B cell (primary cell): ENCODE measurements at regions of chr6 and their contacts with region 1.

Region 1: GRCh38 chr6:31619805-31620585 is 520 bp upstream of the PRRC2A start:
- DNase-seq: peak; percentile 99
- ATAC-seq: peak; percentile 84
- H3K4me3 ChIP-seq: peak overlapping the region; percentile 8 to 90 (median 84)
- H3K4me3 Mint-ChIP-seq: peak overlapping the region; percentile 86
- H3K27ac ChIP-seq: peak overlapping the region; percentile 97 to 99
- H3K27ac Mint-ChIP-seq: peak overlapping the region; percentile 95
- H3K4me1 ChIP-seq: peaks cover 26 to 35% of the 10 kb centered on the region in 2 donors
- H3K4me1 Mint-ChIP-seq: peaks cover 45% of the 10 kb centered on the region
- H3K27me3 ChIP-seq: no peaks in the 10 kb centered on the region
- H3K27me3 Mint-ChIP-seq: no peaks in the 10 kb centered on the region
- CTCF ChIP-seq: no peak

Region 2: GRCh38 chr6:30530014-30530413 is 1090.0 kb before region 1 on chr6:
- CTCF ChIA-PET with region 1: no interaction called
- POLR2A ChIA-PET with region 1: no interaction called
- intact Hi-C with region 1: no loop called
- DNase-seq: peak; percentile 53
- ATAC-seq: peak; percentile 18
- H3K4me3 ChIP-seq: peak overlapping the region in 1 of 5 experiments; percentile 30
- H3K4me3 Mint-ChIP-seq: peak overlapping the region; percentile 49
- H3K27ac ChIP-seq: peak overlapping the region; percentile 58
- H3K27ac Mint-ChIP-seq: peak overlapping the region; percentile 92
- H3K4me1 ChIP-seq: peaks cover 36 to 54% of the 10 kb centered on the region in 2 donors
- H3K4me1 Mint-ChIP-seq: peaks cover 53% of the 10 kb centered on the region
- H3K27me3 ChIP-seq: no peaks in the 10 kb centered on the region
- H3K27me3 Mint-ChIP-seq: no peaks in the 10 kb centered on the region
- CTCF ChIP-seq: no peak

Region 3: GRCh38 chr6:31559958-31560696 is 59.9 kb before region 1 on chr6:
- CTCF ChIA-PET with region 1: interaction called, 3 read pairs
- POLR2A ChIA-PET with region 1: interaction called, 11 read pairs
- intact Hi-C with region 1: no loop called
- DNase-seq: peak; percentile 83
- ATAC-seq: peak; percentile 64
- H3K4me3 ChIP-seq: peak overlapping the region; percentile 4 to 61 (median 45)
- H3K4me3 Mint-ChIP-seq: peak overlapping the region; percentile 92
- H3K27ac ChIP-seq: peak overlapping the region; percentile 80 to 87
- H3K27ac Mint-ChIP-seq: peak overlapping the region; percentile 94
- H3K4me1 ChIP-seq: peaks cover 80 to 81% of the 10 kb centered on the region in 2 donors
- H3K4me1 Mint-ChIP-seq: peaks cover 82% of the 10 kb centered on the region
- H3K27me3 ChIP-seq: no peaks in the 10 kb centered on the region
- H3K27me3 Mint-ChIP-seq: no peaks in the 10 kb centered on the region
- CTCF ChIP-seq: no peak

Region 4: DNA sequence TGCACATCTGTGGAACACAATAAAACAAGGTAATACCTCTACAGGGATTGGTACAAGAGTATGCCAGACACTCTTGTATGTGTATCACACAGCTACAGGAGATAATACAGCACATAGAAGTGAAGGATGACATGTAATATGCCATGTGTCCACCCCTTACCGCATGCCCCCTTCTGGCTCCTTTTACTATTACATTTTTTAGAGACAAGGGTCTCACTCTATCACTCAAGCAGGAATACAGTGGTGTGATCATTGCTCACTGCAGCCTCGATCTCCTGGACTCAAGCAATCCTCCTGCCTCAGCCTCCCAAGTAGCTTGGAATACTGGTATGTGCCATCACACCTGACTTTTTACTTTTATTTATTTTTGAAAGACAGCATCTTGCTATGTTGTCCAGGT is 23.0 kb before region 1 on chr6:
- CTCF ChIA-PET with region 1: interaction called, 44 read pairs
- POLR2A ChIA-PET with region 1: interaction called, 6 read pairs
- intact Hi-C with region 1: loop called (anchors 1 kb)
- DNase-seq: peak; percentile 86
- ATAC-seq: peak; percentile 68
- H3K4me3 ChIP-seq: no peak overlapping the region
- H3K4me3 Mint-ChIP-seq: peak overlapping the region; percentile 35
- H3K27ac ChIP-seq: peak overlapping the region in 1 of 2 donors; percentile 27
- H3K27ac Mint-ChIP-seq: peak overlapping the region; percentile 75
- H3K4me1 ChIP-seq: peaks cover 49 to 61% of the 10 kb centered on the region in 2 donors
- H3K4me1 Mint-ChIP-seq: peaks cover 52% of the 10 kb centered on the region
- H3K27me3 ChIP-seq: no peaks in the 10 kb centered on the region
- H3K27me3 Mint-ChIP-seq: no peaks in the 10 kb centered on the region
- CTCF ChIP-seq: peak; percentile 80

Region 5: DNA sequence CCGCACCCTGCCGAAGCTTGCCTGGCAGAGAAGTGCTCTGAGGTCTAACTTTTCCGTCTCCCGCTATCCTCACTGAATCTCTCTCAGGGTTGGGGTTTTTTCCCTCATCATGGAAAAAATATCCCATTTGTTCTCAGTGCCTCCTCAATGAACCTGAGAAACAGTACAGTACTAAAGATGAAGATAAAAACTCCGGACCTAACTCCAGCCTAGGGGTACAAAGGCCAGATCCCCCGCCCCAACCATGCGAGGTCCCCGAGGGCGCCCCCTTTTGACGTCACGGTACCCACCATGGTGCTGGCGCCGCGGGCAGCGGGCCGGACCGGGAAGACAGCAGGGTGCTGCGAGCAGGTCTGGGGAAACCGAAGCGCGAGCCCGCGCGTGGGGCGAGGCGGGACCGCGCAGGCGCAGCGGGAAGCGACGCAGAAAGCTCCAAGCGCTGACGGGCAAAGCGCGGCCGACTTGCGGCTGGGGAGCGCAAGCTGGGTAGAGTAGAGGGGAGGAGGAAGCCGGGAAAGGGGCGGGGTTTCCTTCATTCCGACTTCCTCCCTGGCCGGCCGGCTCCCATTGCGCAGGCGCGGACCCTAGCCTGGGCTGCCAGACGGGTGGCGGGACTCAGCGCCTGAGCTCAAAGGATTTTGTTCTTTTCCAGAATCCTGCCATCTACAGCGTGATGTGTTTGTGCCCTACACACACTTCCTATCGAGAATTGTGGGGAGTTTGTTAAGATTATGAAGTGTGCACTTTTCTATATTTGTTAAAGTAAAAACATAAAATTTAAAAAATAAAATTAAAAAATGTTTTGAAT is 186.7 kb after region 1 on chr6 and contains the start of gene LSM2:
- CTCF ChIA-PET with region 1: no interaction called
- POLR2A ChIA-PET with region 1: no interaction called
- intact Hi-C with region 1: loop called (anchors 5 kb)
- DNase-seq: peak; percentile 97
- ATAC-seq: peak; percentile 98
- H3K4me3 ChIP-seq: peak within 1 kb of the TSS; percentile 68 to 84 (median 84)
- H3K4me3 Mint-ChIP-seq: peak within 1 kb of the TSS; percentile 87
- H3K27ac ChIP-seq: peak within 1 kb of the TSS; percentile 77 to 93
- H3K27ac Mint-ChIP-seq: peak within 1 kb of the TSS; percentile 88
- H3K4me1 ChIP-seq: peaks cover 8 to 11% of the 10 kb centered on the region in 2 donors
- H3K4me1 Mint-ChIP-seq: peaks cover 16% of the 10 kb centered on the region
- H3K27me3 ChIP-seq: no peaks in the 10 kb centered on the region
- H3K27me3 Mint-ChIP-seq: no peaks in the 10 kb centered on the region
- CTCF ChIP-seq: peak; percentile 34
- total RNA-seq, gene LSM2: 45.3 and 52.4 TPM in 2 replicates

Region 6: GRCh38 chr6:31958741-31959739 is 339.0 kb after region 1 on chr6 and contains the starts of genes NELFE and SKIC2:
- CTCF ChIA-PET with region 1: no interaction called
- POLR2A ChIA-PET with region 1: no interaction called
- intact Hi-C with region 1: loop called (anchors 5 kb)
- DNase-seq: peak; percentile 99
- ATAC-seq: peak; percentile 98
- H3K4me3 ChIP-seq: peak within 1 kb of the TSS; percentile 88 to 98 (median 91)
- H3K4me3 Mint-ChIP-seq: peak within 1 kb of the TSS; percentile 96
- H3K27ac ChIP-seq: peak within 1 kb of the TSS; percentile 84 to 91
- H3K27ac Mint-ChIP-seq: peak within 1 kb of the TSS; percentile 96
- H3K4me1 ChIP-seq: peaks cover 16 to 23% of the 10 kb centered on the region in 2 donors
- H3K4me1 Mint-ChIP-seq: peaks cover 30% of the 10 kb centered on the region
- H3K27me3 ChIP-seq: no peaks in the 10 kb centered on the region
- H3K27me3 Mint-ChIP-seq: no peaks in the 10 kb centered on the region
- CTCF ChIP-seq: no peak
- total RNA-seq, gene NELFE: 48.6 and 53.7 TPM in 2 replicates
- total RNA-seq, gene SKIC2: 119 and 122 TPM in 2 replicates